ENCODE measurements at regions of chr20 and their contacts with region 1.

Region 1: DNA sequence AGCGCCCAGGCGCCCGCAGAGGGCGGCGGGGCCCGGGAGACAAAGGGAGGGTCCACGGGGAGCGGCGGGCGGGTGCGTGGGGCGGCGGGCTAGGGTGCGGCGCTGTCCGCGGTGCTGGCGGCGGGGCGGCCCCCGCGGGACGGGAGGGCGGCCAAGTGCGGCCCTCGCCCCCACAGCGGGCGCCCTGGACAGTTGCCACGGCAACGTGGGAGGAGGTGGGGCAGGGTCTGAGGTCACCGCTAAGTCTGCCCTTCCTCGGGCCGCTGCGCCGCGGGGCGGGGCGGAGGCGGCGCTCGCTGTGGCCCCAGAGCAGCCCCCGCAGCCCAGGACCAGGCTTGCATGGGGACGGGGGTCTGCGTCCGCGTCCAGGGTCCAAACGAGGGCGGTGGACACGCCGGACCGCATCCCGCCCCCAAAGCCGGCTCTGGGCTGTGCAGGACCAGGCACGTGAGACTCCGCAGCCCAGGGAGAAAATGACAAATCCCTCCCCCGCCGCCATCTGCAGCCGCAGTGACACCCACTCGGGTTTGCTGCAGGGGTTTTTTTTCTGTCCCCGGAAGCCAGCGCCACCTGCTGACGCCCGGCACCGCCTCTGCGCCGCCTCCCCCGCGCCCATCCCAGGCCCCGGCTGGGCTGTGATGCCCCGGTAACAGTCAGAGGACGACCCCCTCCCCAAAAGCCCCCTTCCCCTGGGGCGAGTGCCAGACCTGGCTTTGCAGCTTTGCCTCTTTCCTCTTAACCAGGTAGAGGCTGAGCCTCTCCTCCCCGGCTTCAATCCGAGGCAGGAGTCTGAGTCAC is 36.8 kb downstream of the YTHDF1 start:
- DNase-seq: peak in 1 of 2 experiments; percentile 49
- ATAC-seq: peak in 1 of 2 experiments; percentile 8; a peak in 1 of 6 replicates
- H3K4me3 ChIP-seq: peak overlapping the region; percentile 47
- H3K27ac ChIP-seq: peak overlapping the region in 1 of 2 experiments; percentile 38; a peak in 2 of 6 replicates
- H3K4me1 ChIP-seq: peaks cover 46% of the 10 kb centered on the region
- CTCF ChIP-seq: peak; percentile 60
- EP300 ChIP-seq: no peak
- POLR2A ChIP-seq: no peak
- RAD21 ChIP-seq: peak; percentile 52 to 59

Region 2: GRCh38 chr20:63056236-63056948 is 122.7 kb before region 1 on chr20:
- CTCF ChIA-PET with region 1: interaction called, 32 read pairs
- POLR2A ChIA-PET with region 1: no interaction called
- DNase-seq: peak in 1 of 2 experiments; percentile 53
- ATAC-seq: peak; percentile 49 to 81
- H3K4me3 ChIP-seq: no peak overlapping the region
- H3K27ac ChIP-seq: no peak overlapping the region
- H3K4me1 ChIP-seq: 0 out of 3 replicates have a peak, but pooled peaks cover 3% of the 10 kb centered on the region
- CTCF ChIP-seq: peak; percentile 71
- EP300 ChIP-seq: no peak
- POLR2A ChIP-seq: no peak
- RAD21 ChIP-seq: peak; percentile 68 to 83

Region 3: DNA sequence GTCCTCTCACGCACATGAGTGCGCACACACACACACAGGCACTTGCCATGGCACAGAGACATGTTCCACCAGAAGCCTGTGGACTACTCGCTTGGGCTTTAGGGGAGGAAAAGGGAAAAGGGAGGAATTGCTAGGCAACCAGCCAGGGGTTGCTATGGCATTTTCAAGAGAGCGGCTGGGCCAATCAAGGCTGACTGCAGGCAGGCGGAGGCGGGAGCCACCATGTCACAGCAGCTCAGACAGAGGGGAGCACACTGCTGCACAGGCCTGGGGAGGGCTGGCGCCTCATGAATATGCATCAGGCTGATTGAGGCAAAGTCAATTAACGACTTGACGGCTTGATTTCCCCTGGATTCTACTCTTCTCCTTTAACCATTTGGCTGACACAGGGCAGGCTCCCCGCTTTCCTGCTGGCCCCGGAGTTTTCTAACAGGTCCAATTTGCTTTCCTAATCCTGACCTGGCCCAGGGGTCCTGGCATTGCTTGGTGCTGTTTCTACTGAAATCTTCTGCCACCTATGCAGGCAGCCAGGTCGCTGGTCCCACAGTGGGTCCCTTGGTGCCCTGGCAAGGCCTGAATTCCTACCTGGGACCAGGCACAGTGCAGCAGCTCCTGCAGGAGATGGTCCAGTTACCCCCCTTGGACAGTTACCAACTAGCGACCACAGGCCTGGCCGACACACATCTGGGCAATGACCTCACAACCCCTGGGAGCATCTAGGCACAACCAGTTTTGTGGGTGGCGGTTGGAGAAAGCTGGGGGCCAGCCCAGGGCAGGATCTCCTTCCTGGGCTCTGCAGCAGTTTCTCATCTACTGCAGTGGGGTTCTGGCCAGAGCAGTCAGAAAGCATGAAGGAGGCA is 15.3 kb before region 1 on chr20:
- CTCF ChIA-PET with region 1: interaction called, 28 read pairs
- POLR2A ChIA-PET with region 1: no interaction called
- DNase-seq: no peak
- ATAC-seq: no peak
- H3K4me3 ChIP-seq: no peak overlapping the region
- H3K27ac ChIP-seq: no peak overlapping the region
- H3K4me1 ChIP-seq: no peaks in the 10 kb centered on the region
- CTCF ChIP-seq: no peak
- EP300 ChIP-seq: no peak
- POLR2A ChIP-seq: no peak
- RAD21 ChIP-seq: no peak

Region 4: DNA sequence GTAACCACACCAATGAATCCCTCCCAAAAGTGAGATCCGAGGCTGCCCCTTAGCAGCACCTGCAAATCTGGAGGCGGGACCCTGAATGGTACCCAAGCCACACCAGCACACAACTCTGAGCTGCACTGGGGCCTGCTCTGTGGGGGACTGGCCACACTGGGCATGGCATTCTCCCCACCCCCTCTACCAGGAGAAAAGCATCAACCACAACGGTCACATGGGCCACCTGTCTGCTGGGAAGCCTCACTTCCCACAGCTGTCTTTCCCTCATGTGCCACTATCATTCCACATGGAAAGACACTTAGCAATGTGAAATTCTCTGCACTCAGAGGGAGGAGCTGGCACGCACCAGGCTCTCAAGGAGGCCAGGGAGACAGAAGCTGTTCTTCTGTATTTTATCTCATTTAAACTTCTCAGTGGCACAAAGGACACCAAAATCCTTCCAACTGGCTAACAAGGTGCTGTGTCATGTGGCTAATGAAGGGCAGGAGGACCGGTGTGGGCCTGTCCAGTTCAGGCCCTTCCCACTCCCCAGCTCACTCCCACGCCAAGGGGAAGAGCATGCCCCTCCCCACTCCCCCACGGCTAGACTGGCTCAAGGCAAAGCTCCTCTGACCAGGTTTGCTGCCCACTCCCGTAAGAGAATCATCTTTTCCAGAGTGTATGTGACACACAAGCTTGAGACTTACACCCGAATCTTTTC is 17.8 kb after region 1 on chr20:
- CTCF ChIA-PET with region 1: interaction called, 20 read pairs
- POLR2A ChIA-PET with region 1: no interaction called
- DNase-seq: no peak
- ATAC-seq: peak; percentile 14 to 48; a peak in 3 of 6 replicates
- H3K4me3 ChIP-seq: no peak overlapping the region
- H3K27ac ChIP-seq: no peak overlapping the region
- H3K4me1 ChIP-seq: peaks cover 33% of the 10 kb centered on the region
- CTCF ChIP-seq: no peak
- EP300 ChIP-seq: no peak
- POLR2A ChIP-seq: no peak
- RAD21 ChIP-seq: no peak

Region 5: GRCh38 chr20:63216041-63216848 is 37.2 kb after region 1 on chr20 and contains the start of gene YTHDF1:
- CTCF ChIA-PET with region 1: interaction called, 53 read pairs
- POLR2A ChIA-PET with region 1: no interaction called
- DNase-seq: peak; percentile 95 to 96
- ATAC-seq: peak; percentile 82 to 88
- H3K4me3 ChIP-seq: peak within 1 kb of the TSS; percentile 95
- H3K27ac ChIP-seq: peak within 1 kb of the TSS; percentile 96 to 97
- H3K4me1 ChIP-seq: peaks cover 46% of the 10 kb centered on the region
- CTCF ChIP-seq: no peak
- EP300 ChIP-seq: no peak
- POLR2A ChIP-seq: peak; percentile 63
- RAD21 ChIP-seq: no peak
- polyA plus RNA-seq, gene YTHDF1: 31.4 and 31.8 TPM in 2 replicates

Region 6: GRCh38 chr20:63280929-63281545 is 101.9 kb after region 1 on chr20:
- CTCF ChIA-PET with region 1: interaction called, 11 read pairs
- POLR2A ChIA-PET with region 1: no interaction called
- DNase-seq: peak; percentile 48 to 49
- ATAC-seq: peak; percentile 46 to 83; a peak in 4 of 6 replicates
- H3K4me3 ChIP-seq: no peak overlapping the region
- H3K27ac ChIP-seq: no peak overlapping the region
- H3K4me1 ChIP-seq: no peaks in the 10 kb centered on the region
- CTCF ChIP-seq: peak; percentile 36
- EP300 ChIP-seq: no peak
- POLR2A ChIP-seq: no peak
- RAD21 ChIP-seq: peak; percentile 30 to 51; a peak in 1 of 5 replicates

Region 7: GRCh38 chr20:63381807-63382322 is 202.8 kb after region 1 on chr20:
- CTCF ChIA-PET with region 1: interaction called, 32 read pairs
- POLR2A ChIA-PET with region 1: no interaction called
- DNase-seq: peak in 1 of 2 experiments; percentile 59
- ATAC-seq: peak in 1 of 2 experiments; percentile 70; a peak in 3 of 6 replicates
- H3K4me3 ChIP-seq: no peak overlapping the region
- H3K27ac ChIP-seq: no peak overlapping the region
- H3K4me1 ChIP-seq: no peaks in the 10 kb centered on the region
- CTCF ChIP-seq: peak; percentile 88
- EP300 ChIP-seq: no peak
- POLR2A ChIP-seq: no peak
- RAD21 ChIP-seq: peak; percentile 91 to 92

Measured in A549 (cell line).